ENCODE measurements at regions of chr3 and their contacts with region 1.

Region 1: DNA sequence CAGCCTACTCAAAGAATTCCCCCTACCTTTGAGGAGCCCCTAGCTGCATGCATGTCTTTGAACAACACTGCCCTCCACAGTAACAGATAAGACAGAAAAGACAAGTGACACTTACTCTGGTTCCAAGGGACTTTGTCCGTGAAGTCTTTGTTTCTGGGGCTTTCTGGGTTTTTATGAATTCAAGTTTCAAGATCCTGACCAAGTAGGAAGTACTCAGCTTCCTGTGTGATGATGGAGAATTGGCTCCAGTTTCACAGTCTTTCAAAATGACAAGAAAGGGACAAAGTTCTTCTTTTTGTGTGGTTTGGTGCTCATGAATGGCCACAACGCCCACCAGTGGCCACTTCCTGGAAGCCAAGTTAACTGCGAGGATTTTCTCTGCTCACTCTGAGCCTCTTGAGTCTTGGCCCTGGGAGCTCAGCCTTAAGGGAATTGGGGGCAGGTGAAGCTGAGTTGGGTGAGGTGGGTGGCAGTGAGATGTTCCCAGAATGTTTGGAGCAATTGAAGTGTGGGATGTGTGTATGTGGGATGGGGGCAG is at the start of gene CCR1:
- DNase-seq: no peak
- ATAC-seq: peak; percentile 80
- H3K4me3 Mint-ChIP-seq: peak within 1 kb of the TSS; percentile 73
- H3K27ac Mint-ChIP-seq: peak within 1 kb of the TSS; percentile 72
- H3K4me1 Mint-ChIP-seq: peaks cover 52% of the 10 kb centered on the region
- H3K27me3 Mint-ChIP-seq: no peaks in the 10 kb centered on the region
- CTCF ChIP-seq: no peak
- total RNA-seq, gene CCR1: 0.73 and 0.82 TPM in 2 replicates

Region 2: DNA sequence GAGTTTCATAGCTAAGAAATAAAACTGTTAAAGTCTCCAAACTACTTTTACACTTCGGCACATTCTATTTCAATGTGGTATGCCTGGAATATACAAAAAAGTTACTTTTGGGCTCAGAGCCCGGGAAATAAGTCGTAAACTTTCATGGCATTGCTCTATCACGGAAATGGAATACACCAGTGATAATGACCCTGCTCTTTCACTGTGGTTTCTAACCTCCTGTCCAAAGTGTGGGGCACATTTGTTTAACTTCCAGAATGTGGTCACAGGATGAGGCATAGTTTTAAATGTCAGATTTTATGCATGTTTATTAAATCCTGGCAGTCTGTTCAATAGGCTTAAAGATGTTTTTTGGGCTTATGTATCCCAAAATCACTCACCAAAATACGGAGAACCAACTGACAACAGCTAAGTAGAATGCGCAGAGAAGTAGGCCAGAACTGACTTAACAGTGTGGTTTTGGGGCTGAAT is 259.9 kb before region 1 on chr3:
- CTCF ChIA-PET with region 1: no interaction called
- POLR2A ChIA-PET with region 1: no interaction called
- intact Hi-C with region 1: no loop called
- DNase-seq: no peak
- ATAC-seq: no peak
- H3K4me3 Mint-ChIP-seq: no peak overlapping the region
- H3K27ac Mint-ChIP-seq: no peak overlapping the region
- H3K4me1 Mint-ChIP-seq: no peaks in the 10 kb centered on the region
- H3K27me3 Mint-ChIP-seq: no peaks in the 10 kb centered on the region
- CTCF ChIP-seq: no peak

Region 3: DNA sequence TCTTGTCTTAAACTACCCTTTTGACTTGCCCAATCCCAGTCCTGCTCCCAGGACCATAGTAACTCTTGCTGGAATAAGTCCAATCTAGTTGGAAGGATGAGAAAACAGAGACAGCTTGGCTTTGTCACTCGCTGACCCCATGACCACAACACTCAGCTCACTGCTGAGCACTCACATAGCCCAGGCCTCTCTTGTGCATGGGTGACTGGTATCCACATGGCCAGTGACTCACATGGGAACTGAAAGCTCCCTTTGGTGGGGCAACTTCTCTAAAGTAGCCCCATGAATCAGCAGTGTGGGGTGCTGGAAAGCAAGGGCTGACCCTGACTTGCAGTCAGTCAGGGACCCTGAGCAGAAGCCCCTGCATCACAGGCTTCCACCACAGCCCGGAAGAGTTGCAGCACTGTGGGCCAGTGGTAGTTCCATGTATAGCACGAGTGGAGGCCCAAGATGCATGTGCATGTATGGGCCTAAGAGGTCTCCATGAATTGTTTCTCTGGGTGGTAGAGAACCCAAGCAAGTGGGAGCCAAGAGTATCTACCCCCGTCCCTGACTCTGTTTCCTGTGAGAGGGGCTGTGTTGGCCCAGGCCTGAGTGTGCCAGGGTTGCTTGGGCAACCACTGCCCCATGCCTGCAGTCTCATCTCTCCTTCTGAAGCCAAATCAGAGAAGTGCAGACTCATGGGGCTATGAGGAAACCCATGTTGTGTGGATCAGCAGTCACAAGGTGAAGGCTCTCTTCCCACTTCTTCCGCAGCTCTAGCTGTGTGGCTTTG is 118.8 kb before region 1 on chr3:
- CTCF ChIA-PET with region 1: interaction called, 32 read pairs
- POLR2A ChIA-PET with region 1: interaction called, 6 read pairs
- intact Hi-C with region 1: no loop called
- DNase-seq: no peak
- ATAC-seq: peak; percentile 78
- H3K4me3 Mint-ChIP-seq: no peak overlapping the region
- H3K27ac Mint-ChIP-seq: no peak overlapping the region
- H3K4me1 Mint-ChIP-seq: peaks cover 62% of the 10 kb centered on the region
- H3K27me3 Mint-ChIP-seq: no peaks in the 10 kb centered on the region
- CTCF ChIP-seq: no peak

Region 4: GRCh38 chr3:46168583-46169345 is 39.5 kb before region 1 on chr3:
- CTCF ChIA-PET with region 1: no interaction called
- POLR2A ChIA-PET with region 1: no interaction called
- intact Hi-C with region 1: loop called (anchors 5 kb)
- DNase-seq: no peak
- ATAC-seq: no peak
- H3K4me3 Mint-ChIP-seq: no peak overlapping the region
- H3K27ac Mint-ChIP-seq: no peak overlapping the region
- H3K4me1 Mint-ChIP-seq: no peaks in the 10 kb centered on the region
- H3K27me3 Mint-ChIP-seq: no peaks in the 10 kb centered on the region
- CTCF ChIP-seq: no peak

Region 5: DNA sequence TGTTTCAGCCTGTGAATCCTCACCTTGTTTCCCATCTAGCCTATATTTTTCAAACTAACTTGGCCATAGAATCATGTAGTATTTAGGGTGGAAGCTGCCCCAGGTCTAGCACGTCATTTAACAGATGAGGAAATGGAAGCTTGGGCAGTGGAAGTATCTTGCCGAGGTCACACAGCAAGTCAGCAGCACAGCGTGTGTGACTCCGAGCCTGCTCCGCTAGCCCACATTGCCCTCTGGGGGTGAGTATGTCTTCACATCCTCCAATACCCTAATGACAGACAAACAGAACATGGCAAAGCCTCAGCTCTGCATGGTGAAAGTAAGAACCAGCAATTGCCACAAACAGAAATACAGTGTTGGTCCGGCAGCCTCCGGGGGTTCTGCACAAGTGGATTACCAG is 160.3 kb after region 1 on chr3:
- CTCF ChIA-PET with region 1: interaction called, 24 read pairs
- POLR2A ChIA-PET with region 1: no interaction called
- intact Hi-C with region 1: loop called (anchors 2 kb)
- DNase-seq: peak; percentile 33
- ATAC-seq: peak; percentile 91
- H3K4me3 Mint-ChIP-seq: peak overlapping the region; percentile 7
- H3K27ac Mint-ChIP-seq: no peak overlapping the region
- H3K4me1 Mint-ChIP-seq: peaks cover 34% of the 10 kb centered on the region
- H3K27me3 Mint-ChIP-seq: peaks cover 2% of the 10 kb centered on the region
- CTCF ChIP-seq: no peak